ENCODE measurements at regions of chr5 and their contacts with region 1.

Region 1: GRCh38 chr5:142769741-142770631 is at the start of gene ARHGAP26:
- DNase-seq: peak; percentile 91 to 96
- H3K4me3 ChIP-seq: peak within 1 kb of the TSS; percentile 71
- H3K27ac ChIP-seq: peak within 1 kb of the TSS; percentile 59
- H3K4me1 ChIP-seq: peaks cover 29% of the 10 kb centered on the region
- H3K27me3 ChIP-seq: no peaks in the 10 kb centered on the region
- CTCF ChIP-seq: peak; percentile 17; the same call in 1 of the 2 replicates
- total RNA-seq, gene ARHGAP26: 23.0 and 29.7 TPM in 2 replicates

Region 2: DNA sequence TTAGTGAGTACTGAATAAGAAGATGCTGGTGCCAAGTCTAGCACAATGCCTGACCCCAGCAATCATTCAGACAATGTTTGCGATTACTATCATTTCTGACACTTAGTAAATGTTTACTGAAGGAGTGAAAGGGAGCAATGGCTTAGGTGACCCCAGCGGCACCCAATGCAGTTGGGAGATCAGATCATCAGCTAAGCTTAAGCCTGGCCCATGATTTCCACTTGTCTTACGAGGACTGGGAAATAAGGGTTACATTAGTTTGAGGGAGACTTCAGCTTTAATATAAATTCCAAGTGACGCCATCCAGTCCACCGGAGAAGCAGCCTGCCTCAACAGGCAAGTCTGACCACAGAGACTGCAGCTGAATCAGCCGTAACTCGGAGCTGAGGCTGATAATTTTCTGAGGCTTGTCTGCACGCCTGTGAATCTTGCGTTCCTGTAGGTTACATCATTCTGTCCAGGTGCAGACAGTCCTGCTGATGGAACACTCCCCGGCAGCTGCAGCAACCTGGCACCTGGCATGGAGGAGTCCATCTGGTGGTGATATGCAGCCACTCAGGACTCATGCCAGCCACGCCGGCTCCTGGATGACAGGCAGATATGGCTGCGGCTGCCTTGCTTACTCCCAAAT is 49.2 kb before region 1 on chr5:
- CTCF ChIA-PET with region 1: no interaction called
- POLR2A ChIA-PET with region 1: no interaction called
- intact Hi-C with region 1: loop called (anchors 2 kb)
- DNase-seq: peak; percentile 57 to 96
- H3K4me3 ChIP-seq: peak overlapping the region; percentile 27; the same call in 1 of the 2 replicates
- H3K27ac ChIP-seq: peak overlapping the region; percentile 80
- H3K4me1 ChIP-seq: peaks cover 64% of the 10 kb centered on the region
- H3K27me3 ChIP-seq: no peaks in the 10 kb centered on the region
- CTCF ChIP-seq: peak; percentile 40; the same call in 1 of the 2 replicates

Region 3: GRCh38 chr5:142826741-142827732 is 57.1 kb after region 1 on chr5:
- CTCF ChIA-PET with region 1: no interaction called
- POLR2A ChIA-PET with region 1: no interaction called
- intact Hi-C with region 1: loop called (anchors 1 kb)
- DNase-seq: peak; percentile 70 to 90
- H3K4me3 ChIP-seq: peak overlapping the region; percentile 13; the same call in 1 of the 2 replicates
- H3K27ac ChIP-seq: peak overlapping the region; percentile 82
- H3K4me1 ChIP-seq: peaks cover 74% of the 10 kb centered on the region
- H3K27me3 ChIP-seq: no peaks in the 10 kb centered on the region
- CTCF ChIP-seq: no peak

Region 4: DNA sequence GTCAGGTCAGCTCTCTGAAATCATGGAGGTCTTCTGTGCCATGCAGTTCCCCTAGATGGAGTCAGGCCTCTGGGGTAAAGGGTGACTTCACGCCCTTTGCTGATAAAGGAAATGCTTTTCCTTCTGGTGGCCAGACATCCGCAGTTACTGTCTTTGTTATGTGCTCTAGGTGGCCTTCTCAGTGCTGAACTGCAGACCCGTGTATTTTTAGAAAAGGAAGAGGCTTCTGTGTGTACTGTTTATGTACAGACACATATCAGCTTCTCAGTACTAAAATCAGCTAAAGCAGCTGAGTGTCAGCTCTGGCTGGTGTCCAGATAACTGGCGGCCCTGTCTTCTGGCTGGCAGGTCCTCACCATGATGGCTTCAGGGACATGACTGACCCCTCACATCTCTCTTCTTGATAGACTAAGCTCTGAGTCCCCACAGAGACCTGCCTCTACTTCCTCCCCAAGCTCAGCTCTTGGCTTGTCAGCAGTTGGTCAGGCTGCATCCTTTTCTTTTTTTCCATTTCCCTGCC is 75.5 kb after region 1 on chr5:
- CTCF ChIA-PET with region 1: interaction called, 5 read pairs
- POLR2A ChIA-PET with region 1: interaction called, 4 read pairs
- intact Hi-C with region 1: loop called (anchors 5 kb)
- DNase-seq: no peak
- H3K4me3 ChIP-seq: no peak overlapping the region
- H3K27ac ChIP-seq: peak overlapping the region; percentile 90
- H3K4me1 ChIP-seq: peaks cover 32% of the 10 kb centered on the region
- H3K27me3 ChIP-seq: no peaks in the 10 kb centered on the region
- CTCF ChIP-seq: no peak

Region 5: DNA sequence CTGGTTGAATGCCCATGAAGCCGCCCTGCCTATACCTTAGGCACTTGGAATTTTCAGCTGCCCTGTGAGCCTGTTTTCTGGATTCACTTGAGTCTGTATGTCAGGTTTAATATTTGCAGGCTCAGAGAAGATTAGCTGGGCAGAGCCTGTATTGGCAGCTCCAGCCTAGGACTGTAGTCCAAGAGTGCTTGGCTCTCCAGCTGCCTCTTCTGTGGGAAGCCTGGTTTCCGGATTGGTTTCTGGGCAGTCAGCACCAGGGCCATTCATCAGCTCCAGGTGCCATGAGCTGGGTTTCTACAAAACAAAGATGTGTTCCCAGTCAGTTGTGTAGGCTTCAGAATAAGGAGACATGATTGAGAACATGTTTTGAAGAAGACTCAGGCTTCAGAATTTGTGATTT is 90.3 kb after region 1 on chr5:
- CTCF ChIA-PET with region 1: interaction called, 3 read pairs
- POLR2A ChIA-PET with region 1: interaction called, 12 read pairs
- intact Hi-C with region 1: no loop called
- DNase-seq: no peak
- H3K4me3 ChIP-seq: no peak overlapping the region
- H3K27ac ChIP-seq: no peak overlapping the region
- H3K4me1 ChIP-seq: peaks cover 31% of the 10 kb centered on the region
- H3K27me3 ChIP-seq: no peaks in the 10 kb centered on the region
- CTCF ChIP-seq: no peak

Region 6: GRCh38 chr5:143791848-143792731 is 1022.1 kb after region 1 on chr5:
- CTCF ChIA-PET with region 1: no interaction called
- POLR2A ChIA-PET with region 1: no interaction called
- intact Hi-C with region 1: no loop called
- DNase-seq: no peak
- H3K4me3 ChIP-seq: no peak overlapping the region
- H3K27ac ChIP-seq: no peak overlapping the region
- H3K4me1 ChIP-seq: no peaks in the 10 kb centered on the region
- H3K27me3 ChIP-seq: no peaks in the 10 kb centered on the region
- CTCF ChIP-seq: no peak

Measured in PC-9 (cell line).